ENCODE measurements at regions of chr10 and their contacts with region 1.

Region 1: GRCh38 chr10:75099952-75100763 is 11.3 kb upstream of the SAMD8 start:
- DNase-seq: peak; percentile 85
- ATAC-seq: peak; percentile 89
- H3K4me3 Mint-ChIP-seq: no peak overlapping the region
- H3K27ac Mint-ChIP-seq: no peak overlapping the region
- H3K4me1 Mint-ChIP-seq: peaks cover 7% of the 10 kb centered on the region
- H3K27me3 Mint-ChIP-seq: no peaks in the 10 kb centered on the region

Region 2: GRCh38 chr10:74244097-74244685 is 856.0 kb before region 1 on chr10:
- CTCF ChIA-PET with region 1: interaction called, 13 read pairs
- POLR2A ChIA-PET with region 1: no interaction called
- DNase-seq: peak; percentile 45
- ATAC-seq: no peak
- H3K4me3 Mint-ChIP-seq: no peak overlapping the region
- H3K27ac Mint-ChIP-seq: no peak overlapping the region
- H3K4me1 Mint-ChIP-seq: no peaks in the 10 kb centered on the region
- H3K27me3 Mint-ChIP-seq: no peaks in the 10 kb centered on the region

Region 3: DNA sequence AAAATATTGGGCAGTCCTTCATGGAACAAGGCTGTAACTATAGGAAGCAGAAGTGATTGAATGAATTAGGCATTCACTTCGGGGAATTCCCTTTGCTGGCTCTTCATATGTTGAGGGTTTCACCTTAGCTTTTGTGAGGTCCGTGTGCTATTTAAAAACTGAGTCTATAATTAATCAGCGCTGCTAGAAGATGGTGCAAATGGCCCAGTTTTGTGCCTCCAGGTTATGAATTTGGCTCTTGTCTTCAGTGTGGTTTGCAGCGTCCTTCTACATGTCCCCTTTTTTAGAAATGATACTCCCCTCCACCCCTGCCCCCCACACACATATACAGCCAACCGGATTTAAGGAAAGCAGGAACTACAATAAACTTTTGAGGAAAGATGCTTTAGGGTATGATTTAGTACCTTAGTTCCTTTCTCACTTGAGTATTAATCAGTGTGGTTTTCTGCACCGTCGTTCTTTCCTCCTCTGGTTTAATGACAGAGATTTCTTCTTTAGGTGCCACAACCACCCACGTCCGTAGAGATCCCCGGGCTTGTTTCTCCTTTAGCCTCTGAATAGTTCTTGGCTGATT is 99.3 kb before region 1 on chr10:
- CTCF ChIA-PET with region 1: no interaction called
- POLR2A ChIA-PET with region 1: no interaction called
- DNase-seq: no peak
- ATAC-seq: no peak
- H3K4me3 Mint-ChIP-seq: no peak overlapping the region
- H3K27ac Mint-ChIP-seq: no peak overlapping the region
- H3K4me1 Mint-ChIP-seq: peaks cover 5% of the 10 kb centered on the region
- H3K27me3 Mint-ChIP-seq: no peaks in the 10 kb centered on the region

Region 4: GRCh38 chr10:75111367-75111906 is 11.3 kb after region 1 on chr10 and contains the start of gene SAMD8:
- CTCF ChIA-PET with region 1: interaction called, 10 read pairs
- POLR2A ChIA-PET with region 1: interaction called, 3 read pairs
- DNase-seq: peak; percentile 98
- ATAC-seq: peak; percentile 90
- H3K4me3 Mint-ChIP-seq: peak within 1 kb of the TSS; percentile 80
- H3K27ac Mint-ChIP-seq: peak within 1 kb of the TSS; percentile 88
- H3K4me1 Mint-ChIP-seq: peaks cover 48% of the 10 kb centered on the region
- H3K27me3 Mint-ChIP-seq: no peaks in the 10 kb centered on the region
- total RNA-seq, gene SAMD8: 17.4 to 18.2 TPM

Measured in activated CD8-positive, alpha-beta T cell treated with anti-CD3 and anti-CD28 coated beads, Interleukin-2, amount 10 ng/mL, durations not matched to agents 7 days and 5 days (primary cell).